Stomach (tissue), 19 donors: ENCODE measurements at regions of chr10 and their contacts with region 1.

Region 1: GRCh38 chr10:14822879-14823755 is 14.7 kb downstream of the CDNF start:
- DNase-seq: peak; percentile 31 to 72
- H3K4me3 ChIP-seq: no peak overlapping the region
- H3K27ac ChIP-seq: no peak overlapping the region
- H3K4me1 ChIP-seq: peaks cover 0 to 19% (median 1%) of the 10 kb centered on the region in 4 donors
- H3K27me3 ChIP-seq: no peaks in the 10 kb centered on the region
- CTCF ChIP-seq: peak in 3 of 7 experiments; percentile 29 to 60 (median 46)
- EP300 ChIP-seq: no peak
- POLR2A ChIP-seq: no peak

Region 2: DNA sequence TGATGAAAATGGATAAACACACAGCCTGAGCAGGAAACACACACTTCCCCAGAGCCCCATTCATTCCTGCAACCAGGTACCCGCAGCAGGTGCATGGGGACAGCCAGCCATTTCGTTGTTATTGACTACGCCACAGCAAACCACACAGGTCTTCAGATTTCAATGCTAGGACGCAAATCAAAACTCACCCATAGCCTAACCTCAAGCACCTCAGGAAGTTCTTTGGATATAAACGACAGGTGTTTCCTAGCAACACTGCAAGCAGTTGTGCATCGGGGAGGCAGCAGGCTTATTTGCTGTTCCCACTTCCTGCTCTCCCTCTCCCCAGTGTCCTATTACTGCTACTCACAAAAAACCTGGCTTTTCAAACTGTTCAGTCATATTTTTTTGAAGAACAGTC is 315.9 kb before region 1 on chr10:
- intact Hi-C with region 1: loop called (anchors 10 kb)
- DNase-seq: peak in 1 of 2 donors; percentile 68
- H3K4me3 ChIP-seq: no peak overlapping the region
- H3K27ac ChIP-seq: no peak overlapping the region
- H3K4me1 ChIP-seq: no peaks in the 10 kb centered on the region
- H3K27me3 ChIP-seq: no peaks in the 10 kb centered on the region
- CTCF ChIP-seq: no peak
- EP300 ChIP-seq: no peak
- POLR2A ChIP-seq: no peak

Region 3: GRCh38 chr10:14536241-14537213 is 286.6 kb before region 1 on chr10:
- intact Hi-C with region 1: loop called (anchors 10 kb)
- DNase-seq: peak; percentile 84 to 85
- H3K4me3 ChIP-seq: no peak overlapping the region
- H3K27ac ChIP-seq: peak overlapping the region; percentile 20 to 56 (median 42)
- H3K4me1 ChIP-seq: peaks cover 44 to 89% (median 52%) of the 10 kb centered on the region in 4 donors
- H3K27me3 ChIP-seq: no peaks in the 10 kb centered on the region
- CTCF ChIP-seq: peak in 5 of 7 experiments; percentile 26 to 69 (median 50)
- EP300 ChIP-seq: no peak
- POLR2A ChIP-seq: no peak

Region 4: DNA sequence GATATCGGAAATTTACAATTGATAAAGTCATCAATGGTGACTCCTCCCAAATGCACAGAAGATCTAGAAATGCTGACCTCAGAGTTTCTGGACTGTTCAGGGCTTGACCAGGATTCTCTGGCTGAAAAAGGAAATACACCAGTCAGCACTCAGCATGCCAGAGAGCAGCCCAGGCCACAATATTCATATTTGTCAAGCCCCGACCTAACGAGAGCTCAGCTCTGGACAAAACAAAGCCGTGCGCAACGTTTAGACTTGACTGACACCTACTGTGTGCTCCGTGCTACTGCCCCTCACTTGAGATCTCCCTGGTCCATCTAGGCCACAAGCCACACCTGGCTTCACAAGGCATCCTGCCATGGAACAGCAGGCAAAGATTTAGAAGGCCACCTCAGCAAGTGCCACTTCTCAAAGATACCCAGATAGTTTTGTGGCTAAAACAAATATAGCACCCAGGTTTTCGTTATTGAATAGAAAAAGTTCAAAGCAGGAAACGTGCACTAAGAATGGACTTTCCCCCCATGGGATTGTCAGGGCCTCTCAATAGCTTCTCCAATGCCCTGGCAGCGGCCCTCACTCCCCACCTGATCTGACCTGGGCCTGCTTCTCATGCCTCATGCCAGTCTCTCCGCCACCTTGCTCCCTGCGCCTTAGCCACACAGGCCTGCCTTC is 266.7 kb before region 1 on chr10:
- intact Hi-C with region 1: no loop called
- DNase-seq: peak in 1 of 2 donors; percentile 70
- H3K4me3 ChIP-seq: no peak overlapping the region
- H3K27ac ChIP-seq: peak overlapping the region; percentile 69 to 90 (median 82)
- H3K4me1 ChIP-seq: peaks cover 64 to 97% (median 75%) of the 10 kb centered on the region in 4 donors
- H3K27me3 ChIP-seq: no peaks in the 10 kb centered on the region
- CTCF ChIP-seq: no peak
- EP300 ChIP-seq: no peak
- POLR2A ChIP-seq: no peak

Region 5: DNA sequence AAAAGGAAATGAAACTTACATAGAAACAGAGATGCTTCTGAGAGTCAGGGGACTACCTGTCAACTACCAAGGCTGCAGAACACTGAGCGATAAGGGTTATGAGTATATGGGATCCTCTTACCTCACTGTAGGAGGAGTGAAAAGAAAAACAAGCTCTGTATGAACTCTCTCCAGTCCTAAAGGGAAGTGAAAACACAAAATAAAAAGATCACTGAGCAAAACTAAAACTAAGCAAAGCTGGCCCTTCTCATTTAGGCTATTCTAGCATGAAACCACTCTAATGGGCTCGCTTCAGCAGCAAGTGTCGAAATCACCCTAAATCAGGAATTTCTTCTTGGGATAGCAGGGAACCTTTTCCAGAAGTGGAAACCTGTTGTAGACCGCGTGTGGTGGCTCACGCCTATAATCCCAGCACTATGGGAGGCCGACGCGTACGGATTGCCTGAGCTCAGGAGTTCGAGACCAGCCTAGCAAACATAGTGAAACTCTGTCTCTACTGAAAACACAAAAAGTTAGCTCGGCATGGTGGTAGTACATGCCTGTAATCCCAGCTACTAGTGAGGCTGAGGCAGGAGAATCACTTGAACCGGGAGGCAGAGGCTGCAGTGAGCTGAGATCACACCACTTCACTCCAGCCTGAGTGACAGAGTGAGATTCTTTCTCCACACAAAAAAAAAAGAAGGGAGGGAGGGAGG is 103.8 kb after region 1 on chr10:
- intact Hi-C with region 1: no loop called
- DNase-seq: no peak
- H3K4me3 ChIP-seq: no peak overlapping the region
- H3K27ac ChIP-seq: peak overlapping the region; percentile 0 to 81 (median 73)
- H3K4me1 ChIP-seq: no peaks in the 10 kb centered on the region
- H3K27me3 ChIP-seq: no peaks in the 10 kb centered on the region
- CTCF ChIP-seq: no peak
- EP300 ChIP-seq: no peak
- POLR2A ChIP-seq: no peak

Region 6: GRCh38 chr10:15068802-15069201 is 245.7 kb after region 1 on chr10:
- intact Hi-C with region 1: no loop called
- DNase-seq: no peak
- H3K4me3 ChIP-seq: no peak overlapping the region
- H3K27ac ChIP-seq: no peak overlapping the region
- H3K4me1 ChIP-seq: no peaks in the 10 kb centered on the region
- H3K27me3 ChIP-seq: no peaks in the 10 kb centered on the region
- CTCF ChIP-seq: no peak
- EP300 ChIP-seq: no peak
- POLR2A ChIP-seq: no peak